ENCODE measurements at regions of chr17 and their contacts with region 1.

Region 1: DNA sequence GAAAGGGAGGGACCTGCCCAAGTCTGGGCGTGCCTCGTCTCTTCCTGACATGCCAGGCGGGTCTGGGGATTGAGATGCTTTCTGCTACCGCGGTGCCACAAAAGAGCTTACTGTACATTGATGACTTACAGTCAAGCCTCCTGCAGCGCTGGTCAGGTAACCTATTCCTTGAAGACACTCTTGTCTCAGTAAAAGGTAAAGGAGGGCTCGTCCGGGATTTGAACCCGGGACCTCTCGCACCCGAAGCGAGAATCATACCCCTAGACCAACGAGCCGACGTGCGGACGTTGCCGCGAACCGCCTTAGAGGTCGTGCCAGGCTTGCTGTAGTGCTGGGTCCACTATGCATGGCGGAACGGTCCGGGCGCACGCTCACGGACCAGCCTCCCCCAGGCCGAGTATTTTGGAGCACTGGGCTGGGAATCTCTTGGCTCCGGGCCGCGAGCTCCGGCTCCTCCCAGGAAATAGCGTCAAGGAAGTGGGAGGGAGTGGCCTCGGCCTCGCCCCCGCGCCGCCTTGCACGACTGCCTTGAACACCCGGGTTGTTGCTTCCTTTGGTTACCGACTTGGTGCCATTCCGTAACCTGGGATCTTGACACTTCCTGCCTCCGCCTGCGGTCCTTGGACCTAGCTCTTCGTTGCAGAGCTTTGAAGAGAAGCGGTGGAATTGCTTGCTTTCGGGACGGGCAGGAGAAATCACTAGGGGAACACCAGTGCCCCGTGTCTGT is 12.4 kb upstream of the AURKB start:
- DNase-seq: peak in 1 of 2 donors; percentile 98
- H3K4me3 ChIP-seq: peak overlapping the region; percentile 56 to 76
- H3K27ac ChIP-seq: peak overlapping the region; percentile 96
- H3K4me1 ChIP-seq: peaks cover 32% of the 10 kb centered on the region
- H3K27me3 ChIP-seq: no peaks in the 10 kb centered on the region
- CTCF ChIP-seq: no peak
- POLR2A ChIP-seq: peak in 1 of 2 donors; percentile 75

Region 2: DNA sequence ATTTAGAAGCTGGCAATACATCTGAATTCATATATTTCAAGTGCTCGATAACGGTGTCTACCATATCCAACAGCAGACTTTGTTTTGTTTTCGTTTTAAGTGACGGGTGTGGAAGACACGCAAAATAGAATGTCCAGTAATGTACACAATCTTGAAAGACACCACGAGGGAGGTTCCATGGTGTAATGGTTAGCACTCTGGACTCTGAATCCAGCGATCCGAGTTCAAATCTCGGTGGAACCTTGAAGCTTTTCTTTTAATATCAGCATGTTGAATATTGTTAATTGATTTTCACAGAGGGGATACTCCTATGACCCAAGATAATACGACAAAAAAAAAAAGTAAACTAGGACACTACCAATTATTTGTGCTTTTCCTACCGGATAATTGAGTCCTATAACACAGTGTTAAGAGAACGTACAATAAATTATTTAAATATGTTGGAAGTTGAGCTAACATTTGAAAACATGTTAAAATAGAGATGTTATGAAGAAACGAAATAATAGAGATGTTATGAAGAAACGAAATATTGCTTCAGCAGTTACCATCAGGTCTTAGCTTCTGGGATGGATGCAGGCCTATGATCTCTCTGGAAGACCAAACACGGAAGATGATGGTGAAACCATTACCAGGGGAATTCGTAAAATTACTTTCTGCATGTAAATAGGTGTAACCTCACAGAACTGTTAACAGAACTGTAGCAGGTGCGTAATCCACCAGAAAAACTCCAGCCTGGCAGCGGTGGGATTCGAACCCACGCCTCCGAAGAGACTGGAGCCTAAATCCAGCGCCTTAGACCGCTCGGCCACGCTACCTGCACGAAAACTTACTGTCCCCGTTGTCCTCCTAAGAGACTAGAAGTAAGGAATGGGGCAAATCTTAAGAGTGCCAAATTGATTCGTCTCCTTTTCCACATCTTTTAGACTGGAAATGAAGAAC is 102.9 kb before region 1 on chr17:
- intact Hi-C with region 1: loop called (anchors 5 kb)
- DNase-seq: no peak
- H3K4me3 ChIP-seq: peak overlapping the region; percentile 50 to 76
- H3K27ac ChIP-seq: peak overlapping the region; percentile 98
- H3K4me1 ChIP-seq: peaks cover 66% of the 10 kb centered on the region
- H3K27me3 ChIP-seq: no peaks in the 10 kb centered on the region
- CTCF ChIP-seq: no peak
- POLR2A ChIP-seq: no peak

Region 3: GRCh38 chr17:8332678-8333077 is 109.9 kb after region 1 on chr17:
- intact Hi-C with region 1: no loop called
- DNase-seq: no peak
- H3K4me3 ChIP-seq: no peak overlapping the region
- H3K27ac ChIP-seq: no peak overlapping the region
- H3K4me1 ChIP-seq: no peaks in the 10 kb centered on the region
- H3K27me3 ChIP-seq: no peaks in the 10 kb centered on the region
- CTCF ChIP-seq: no peak
- POLR2A ChIP-seq: no peak

Measured in vagina (tissue), 2 donors.